ENCODE measurements at regions of chr2 and their contacts with region 1.

Region 1: GRCh38 chr2:30666307-30666874 is 140.9 kb downstream of the CAPN13 start:
- DNase-seq: no peak
- CTCF ChIP-seq: no peak

Region 2: GRCh38 chr2:30653847-30654246 is 12.5 kb before region 1 on chr2:
- CTCF ChIA-PET with region 1: interaction called, 15 read pairs
- POLR2A ChIA-PET with region 1: no interaction called
- DNase-seq: no peak
- CTCF ChIP-seq: no peak

Region 3: GRCh38 chr2:30679426-30680088 is 13.2 kb after region 1 on chr2:
- CTCF ChIA-PET with region 1: no interaction called
- POLR2A ChIA-PET with region 1: no interaction called
- DNase-seq: no peak
- CTCF ChIP-seq: no peak

Region 4: DNA sequence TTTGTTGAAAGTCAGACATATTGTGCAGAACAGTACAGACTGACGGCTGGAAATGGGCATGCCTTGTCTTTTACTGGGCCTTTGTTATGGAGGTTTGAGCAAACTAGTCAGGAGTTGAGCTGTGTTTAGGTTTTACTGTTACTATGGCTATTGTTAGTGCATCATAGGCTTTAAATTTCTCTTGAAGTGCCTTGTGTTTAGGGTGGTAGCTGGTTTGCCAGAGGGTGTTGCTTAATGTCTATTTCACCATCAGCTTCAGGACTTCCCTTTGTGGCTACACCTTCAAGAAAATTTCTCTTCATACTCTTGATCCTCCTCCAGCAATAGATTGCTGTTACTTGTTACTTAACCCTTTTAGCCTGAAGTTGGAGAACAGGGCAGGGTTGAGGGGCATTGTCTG is 36.3 kb after region 1 on chr2:
- CTCF ChIA-PET with region 1: no interaction called
- POLR2A ChIA-PET with region 1: no interaction called
- DNase-seq: no peak
- CTCF ChIP-seq: no peak

Measured in GM10248 (cell line).